Common myeloid progenitor, CD34-positive (primary cell): ENCODE measurements at regions of chr22 and their contacts with region 1.

Region 1: GRCh38 chr22:27865496-27865895 is 53.6 kb downstream of the PITPNB start:
- DNase-seq: peak; percentile 42 to 71 (median 50)
- H3K4me3 ChIP-seq: peak overlapping the region in 2 of 7 experiments; percentile 29 to 46
- H3K27ac ChIP-seq: peak overlapping the region in 1 of 2 experiments; percentile 12
- H3K4me1 ChIP-seq: peaks cover 6 to 32% (median 10%) of the 10 kb centered on the region in 4 experiments
- H3K27me3 ChIP-seq: no peaks in the 10 kb centered on the region

Region 2: GRCh38 chr22:27820896-27821866 is 44.3 kb before region 1 on chr22:
- CTCF ChIA-PET with region 1: no interaction called
- POLR2A ChIA-PET with region 1: no interaction called
- DNase-seq: no peak
- H3K4me3 ChIP-seq: no peak overlapping the region
- H3K27ac ChIP-seq: no peak overlapping the region
- H3K4me1 ChIP-seq: no peaks in the 10 kb centered on the region
- H3K27me3 ChIP-seq: no peaks in the 10 kb centered on the region

Region 3: GRCh38 chr22:27880778-27881394 is 15.4 kb after region 1 on chr22:
- CTCF ChIA-PET with region 1: interaction called, 12 read pairs
- POLR2A ChIA-PET with region 1: no interaction called
- DNase-seq: peak; percentile 64 to 82 (median 80)
- H3K4me3 ChIP-seq: no peak overlapping the region
- H3K27ac ChIP-seq: no peak overlapping the region
- H3K4me1 ChIP-seq: peaks cover 5 to 18% (median 9%) of the 10 kb centered on the region in 4 experiments
- H3K27me3 ChIP-seq: no peaks in the 10 kb centered on the region